ENCODE measurements at regions of chr5 and their contacts with region 1.

Region 1: GRCh38 chr5:150567021-150567717 is 59.2 kb downstream of the NDST1 start:
- ATAC-seq: peak in 5 of 8 experiments; percentile 10 to 96 (median 89)
- H3K4me3 ChIP-seq: no peak overlapping the region
- H3K27ac ChIP-seq: no peak overlapping the region
- H3K4me1 ChIP-seq: no peaks in the 10 kb centered on the region

Region 2: DNA sequence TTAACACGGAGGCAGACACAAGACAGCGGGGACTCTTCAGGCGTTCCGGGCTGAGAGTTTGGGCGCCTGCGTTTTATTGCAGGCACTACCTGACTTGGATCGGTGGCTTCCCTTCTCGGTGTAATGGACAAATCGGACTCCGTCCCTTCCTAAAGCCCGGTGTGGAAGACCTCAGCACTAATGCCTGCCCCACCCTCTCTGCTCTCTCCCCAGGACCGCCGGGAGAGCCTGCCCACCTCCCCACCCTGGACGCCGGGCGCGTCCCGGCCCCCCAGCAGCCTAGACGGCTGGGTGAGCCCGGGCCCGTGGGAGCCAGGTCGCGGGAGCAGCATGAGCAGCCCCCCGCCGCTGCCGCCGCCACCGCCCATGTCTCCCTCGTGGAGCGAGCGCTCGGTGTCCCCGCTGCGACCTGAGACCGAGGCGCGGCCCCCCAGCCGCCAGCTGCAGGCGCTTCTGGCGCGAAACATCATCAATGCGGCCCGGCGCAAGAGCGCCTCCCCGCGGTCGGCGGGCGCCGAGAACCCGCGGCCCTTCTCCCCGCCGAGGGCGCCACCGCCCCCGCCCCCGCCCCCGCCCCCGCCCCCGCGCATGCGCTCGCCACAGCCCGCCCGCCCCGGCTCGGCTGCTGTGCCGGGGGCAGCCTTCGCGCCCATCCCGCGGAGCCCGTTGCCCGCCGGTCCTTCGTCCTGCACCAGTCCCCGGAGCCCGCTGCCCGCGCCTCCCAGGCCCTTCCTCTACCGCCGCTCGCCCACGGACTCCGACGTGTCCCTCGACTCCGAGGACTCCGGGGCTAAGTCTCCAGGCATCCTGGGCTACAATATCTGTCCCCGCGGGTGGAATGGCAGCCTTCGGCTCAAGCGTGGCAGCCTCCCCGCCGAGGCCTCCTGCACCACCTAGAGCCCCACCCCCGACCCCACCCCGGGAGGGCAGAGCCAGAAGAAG is 89.3 kb after region 1 on chr5:
- in situ Hi-C with region 1: loop called in 6 of 9 experiments (anchors 5 to 25 kb)
- ATAC-seq: peak; percentile 70 to 93 (median 85)
- H3K4me3 ChIP-seq: peak overlapping the region; percentile 48 to 58 (median 55)
- H3K27ac ChIP-seq: no peak overlapping the region
- H3K4me1 ChIP-seq: peaks cover 11 to 29% of the 10 kb centered on the region in 2 donors

Measured in motor neuron (in vitro differentiated cells).